T-cell (primary cell): ENCODE measurements at regions of chr19 and their contacts with region 1.

Region 1: DNA sequence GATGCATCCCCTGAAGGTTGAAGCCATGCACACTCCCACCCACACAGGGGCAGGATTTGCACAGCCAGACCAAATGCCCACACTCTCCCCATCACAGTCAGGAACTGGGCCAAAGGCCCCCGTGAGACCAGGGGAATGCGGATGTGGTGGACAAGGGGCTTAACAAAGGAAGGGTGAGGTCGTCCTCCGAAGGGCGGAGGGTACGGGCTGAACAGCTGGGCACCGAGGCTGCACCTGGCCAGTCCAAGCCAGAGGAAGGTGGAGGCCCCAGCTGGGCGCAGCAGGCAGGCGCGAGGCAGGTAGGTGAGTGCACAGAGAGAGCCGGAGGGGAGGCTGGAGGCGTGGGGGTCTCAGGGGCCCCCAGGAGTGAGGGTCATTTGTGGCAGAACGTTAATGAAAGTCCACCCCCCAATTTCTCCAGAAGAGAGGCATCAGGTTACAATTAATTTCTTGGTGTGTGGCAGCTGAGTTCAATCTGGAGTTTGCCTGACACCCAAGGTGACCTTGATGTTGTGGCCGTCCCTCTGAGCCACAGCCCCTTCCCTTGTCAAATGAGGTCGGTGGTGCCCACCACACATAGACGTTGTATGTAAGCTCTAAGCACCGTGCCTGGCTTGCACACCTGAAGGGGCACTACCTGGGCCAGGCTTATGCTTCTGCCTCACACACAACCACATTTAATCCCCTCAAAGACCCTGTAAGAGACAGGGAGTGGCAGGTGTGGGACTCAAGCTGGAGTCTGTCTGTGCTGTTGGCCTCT is 2.9 kb downstream of the KLK15 start:
- DNase-seq: no peak
- ATAC-seq: no peak
- H3K4me3 ChIP-seq: no peak overlapping the region
- H3K4me3 Mint-ChIP-seq: no peak overlapping the region
- H3K27ac ChIP-seq: no peak overlapping the region
- H3K27ac Mint-ChIP-seq: no peak overlapping the region
- H3K4me1 ChIP-seq: peaks cover 0 to 6% of the 10 kb centered on the region in 2 experiments
- H3K4me1 Mint-ChIP-seq: peaks cover 3 to 7% (median 3%) of the 10 kb centered on the region in 3 donors
- H3K27me3 ChIP-seq: peaks cover 0 to 64% of the 10 kb centered on the region in 2 experiments
- H3K27me3 Mint-ChIP-seq: peaks cover 50 to 64% of the 10 kb centered on the region in 2 donors

Region 2: DNA sequence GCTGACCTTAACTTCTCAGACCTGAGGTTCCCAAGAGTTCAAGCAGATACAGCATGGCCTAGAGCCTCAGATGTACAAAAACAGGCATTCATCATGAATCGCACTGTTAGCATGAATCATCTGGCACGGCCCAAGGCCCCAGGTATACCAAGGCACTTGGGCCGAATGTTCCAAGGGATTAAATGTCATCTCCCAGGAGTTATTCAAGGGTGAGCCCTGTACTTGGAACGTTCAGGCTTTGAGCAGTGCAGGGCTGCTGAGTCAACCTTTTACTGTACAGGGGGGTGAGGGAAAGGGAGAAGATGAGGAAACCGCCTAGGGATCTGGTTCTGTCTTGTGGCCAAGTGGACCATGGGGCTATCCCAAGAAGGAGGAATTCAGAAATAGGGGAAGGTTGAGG is 30.6 kb after region 1 on chr19:
- CTCF ChIA-PET with region 1: interaction called in 1 of 2 experiments, 11 read pairs
- POLR2A ChIA-PET with region 1: no interaction called
- DNase-seq: no peak
- ATAC-seq: no peak
- H3K4me3 ChIP-seq: no peak overlapping the region
- H3K4me3 Mint-ChIP-seq: no peak overlapping the region
- H3K27ac ChIP-seq: no peak overlapping the region
- H3K27ac Mint-ChIP-seq: no peak overlapping the region
- H3K4me1 ChIP-seq: no peaks in the 10 kb centered on the region
- H3K4me1 Mint-ChIP-seq: no peaks in the 10 kb centered on the region
- H3K27me3 ChIP-seq: peaks cover 3 to 37% of the 10 kb centered on the region in 2 experiments
- H3K27me3 Mint-ChIP-seq: peaks cover 52 to 54% of the 10 kb centered on the region in 2 donors

Region 3: DNA sequence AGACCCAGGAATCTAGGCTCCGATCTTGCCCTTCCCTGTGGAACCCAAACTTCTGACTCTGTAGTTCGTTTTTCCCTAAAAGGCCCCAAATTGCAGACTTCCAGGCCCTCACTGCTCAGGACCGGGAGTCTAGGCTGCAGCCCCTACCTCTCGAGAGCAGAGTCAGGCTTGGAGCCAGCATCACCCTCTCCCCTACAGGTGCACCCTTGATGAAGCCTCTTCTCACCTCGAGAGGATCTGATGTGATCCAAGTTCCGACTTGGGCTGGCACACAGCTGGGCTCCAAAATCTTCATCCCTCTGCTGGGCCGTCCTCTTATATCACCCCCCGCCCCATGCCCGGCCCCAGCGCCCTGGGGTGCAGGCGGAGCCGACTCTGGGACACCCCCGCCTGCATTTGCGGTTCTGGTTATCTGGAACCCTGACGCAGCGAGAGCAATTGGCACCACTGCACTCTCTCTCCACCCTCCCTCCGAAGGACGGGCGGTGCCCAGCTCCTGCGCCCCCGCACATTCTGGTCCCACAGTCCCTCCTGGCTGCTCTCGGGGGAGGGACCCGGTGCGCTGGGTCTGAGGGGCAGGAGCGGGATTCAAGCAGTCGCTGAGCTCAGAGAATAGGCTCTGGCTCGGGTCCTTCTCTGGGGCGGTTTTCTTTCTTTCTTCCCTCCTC is 153.3 kb after region 1 on chr19 and contains the start of gene KLK7:
- CTCF ChIA-PET with region 1: no interaction called
- POLR2A ChIA-PET with region 1: no interaction called
- DNase-seq: no peak
- ATAC-seq: no peak
- H3K4me3 ChIP-seq: no peak within 1 kb of the TSS
- H3K4me3 Mint-ChIP-seq: no peak within 1 kb of the TSS
- H3K27ac ChIP-seq: no peak within 1 kb of the TSS
- H3K27ac Mint-ChIP-seq: no peak within 1 kb of the TSS
- H3K4me1 ChIP-seq: no peaks in the 10 kb centered on the region
- H3K4me1 Mint-ChIP-seq: no peaks in the 10 kb centered on the region
- H3K27me3 ChIP-seq: peaks cover 3 to 43% of the 10 kb centered on the region in 2 experiments
- H3K27me3 Mint-ChIP-seq: peaks cover 41 to 49% of the 10 kb centered on the region in 2 donors
- total RNA-seq, gene KLK7: not detected